ENCODE measurements at regions of chr20 and their contacts with region 1.

Region 1: GRCh38 chr20:32207626-32208498 is at the starts of genes PLAGL2 and POFUT1:
- DNase-seq: peak; percentile 91
- H3K4me3 ChIP-seq: peak within 1 kb of the TSS; percentile 70 to 100 (median 91)
- H3K27ac ChIP-seq: peak within 1 kb of the TSS; percentile 75 to 93 (median 85)
- H3K4me1 ChIP-seq: peaks cover 0 to 58% (median 54%) of the 10 kb centered on the region in 4 donors
- H3K27me3 ChIP-seq: no peaks in the 10 kb centered on the region
- CTCF ChIP-seq: no peak
- EP300 ChIP-seq: no peak
- POLR2A ChIP-seq: peak in 1 of 2 donors; percentile 46
- total RNA-seq, gene PLAGL2: 3.3 to 5.6 (median 4.6) TPM
- total RNA-seq, gene POFUT1: 23.5 to 31.6 (median 27.8) TPM

Region 2: GRCh38 chr20:32109392-32110172 is 98.3 kb before region 1 on chr20 and contains the start of gene TM9SF4:
- intact Hi-C with region 1: loop called (anchors 5 kb)
- DNase-seq: peak; percentile 95
- H3K4me3 ChIP-seq: peak within 1 kb of the TSS; percentile 65 to 95 (median 82)
- H3K27ac ChIP-seq: peak within 1 kb of the TSS; percentile 94 to 95 (median 95)
- H3K4me1 ChIP-seq: peaks cover 0 to 27% (median 22%) of the 10 kb centered on the region in 4 donors
- H3K27me3 ChIP-seq: no peaks in the 10 kb centered on the region
- CTCF ChIP-seq: no peak
- EP300 ChIP-seq: no peak
- POLR2A ChIP-seq: peak; percentile 56 to 63
- total RNA-seq, gene TM9SF4: 15.3 to 24.0 (median 19.1) TPM

Region 3: GRCh38 chr20:32484958-32485769 is 277.3 kb after region 1 on chr20:
- intact Hi-C with region 1: loop called (anchors 2 kb)
- DNase-seq: peak; percentile 86
- H3K4me3 ChIP-seq: peak overlapping the region; percentile 74 to 97 (median 96)
- H3K27ac ChIP-seq: peak overlapping the region; percentile 85 to 97 (median 94)
- H3K4me1 ChIP-seq: peaks cover 0 to 40% (median 31%) of the 10 kb centered on the region in 4 donors
- H3K27me3 ChIP-seq: no peaks in the 10 kb centered on the region
- CTCF ChIP-seq: peak; percentile 70 to 90 (median 84)
- EP300 ChIP-seq: no peak
- POLR2A ChIP-seq: no peak